HEK293 (cell line): ENCODE measurements at regions of chr3 and their contacts with region 1.

Region 1: GRCh38 chr3:185942907-185943759 is 5.3 kb upstream of the TRA2B start:
- H3K4me3 ChIP-seq: no peak overlapping the region
- H3K27ac ChIP-seq: no peak overlapping the region
- H3K4me1 ChIP-seq: no peaks in the 10 kb centered on the region
- CTCF ChIP-seq: peak; percentile 44; the same call in 1 of the 2 replicates

Region 2: DNA sequence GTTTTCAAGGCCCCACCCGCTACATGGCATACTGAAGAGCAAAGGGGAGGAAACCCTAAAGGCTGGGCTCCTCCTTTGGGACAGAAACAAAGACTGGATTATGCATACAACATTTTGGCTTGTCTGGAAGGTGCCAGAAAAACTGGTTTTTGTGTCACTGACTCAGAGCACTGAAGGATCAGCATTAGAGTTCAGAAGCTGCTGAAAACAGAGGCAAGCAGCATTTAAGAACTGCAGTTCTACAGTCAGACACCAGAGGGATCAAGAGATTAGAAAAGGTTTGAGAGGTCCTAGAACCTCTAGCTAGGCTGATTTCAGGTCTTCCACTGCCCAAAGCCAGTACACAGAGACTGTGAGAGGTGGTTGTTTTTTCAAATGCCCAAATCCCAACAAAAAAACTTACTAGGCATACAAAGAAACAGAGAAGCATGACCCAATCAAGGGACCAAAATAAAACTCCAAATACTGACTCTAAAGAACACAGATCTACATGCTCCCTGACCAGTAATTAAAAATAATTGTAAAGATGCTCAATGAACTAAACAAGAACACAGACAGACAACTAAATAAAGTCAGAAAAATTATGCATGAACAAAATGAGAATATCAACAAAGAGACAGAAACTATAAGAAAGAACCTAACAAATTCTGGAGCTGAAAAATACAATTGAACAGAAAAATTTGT is 265.8 kb before region 1 on chr3:
- CTCF ChIA-PET with region 1: interaction called, 12 read pairs
- POLR2A ChIA-PET with region 1: no interaction called
- H3K4me3 ChIP-seq: no peak overlapping the region
- H3K27ac ChIP-seq: no peak overlapping the region
- H3K4me1 ChIP-seq: no peaks in the 10 kb centered on the region
- CTCF ChIP-seq: no peak

Region 3: GRCh38 chr3:185733980-185734724 is 209.0 kb before region 1 on chr3:
- CTCF ChIA-PET with region 1: interaction called, 10 read pairs
- POLR2A ChIA-PET with region 1: interaction called, 3 read pairs
- H3K4me3 ChIP-seq: no peak overlapping the region
- H3K27ac ChIP-seq: no peak overlapping the region
- H3K4me1 ChIP-seq: peaks cover 14% of the 10 kb centered on the region; the same call in 1 of the 2 replicates
- CTCF ChIP-seq: peak; percentile 31; the same call in 1 of the 2 replicates

Region 4: DNA sequence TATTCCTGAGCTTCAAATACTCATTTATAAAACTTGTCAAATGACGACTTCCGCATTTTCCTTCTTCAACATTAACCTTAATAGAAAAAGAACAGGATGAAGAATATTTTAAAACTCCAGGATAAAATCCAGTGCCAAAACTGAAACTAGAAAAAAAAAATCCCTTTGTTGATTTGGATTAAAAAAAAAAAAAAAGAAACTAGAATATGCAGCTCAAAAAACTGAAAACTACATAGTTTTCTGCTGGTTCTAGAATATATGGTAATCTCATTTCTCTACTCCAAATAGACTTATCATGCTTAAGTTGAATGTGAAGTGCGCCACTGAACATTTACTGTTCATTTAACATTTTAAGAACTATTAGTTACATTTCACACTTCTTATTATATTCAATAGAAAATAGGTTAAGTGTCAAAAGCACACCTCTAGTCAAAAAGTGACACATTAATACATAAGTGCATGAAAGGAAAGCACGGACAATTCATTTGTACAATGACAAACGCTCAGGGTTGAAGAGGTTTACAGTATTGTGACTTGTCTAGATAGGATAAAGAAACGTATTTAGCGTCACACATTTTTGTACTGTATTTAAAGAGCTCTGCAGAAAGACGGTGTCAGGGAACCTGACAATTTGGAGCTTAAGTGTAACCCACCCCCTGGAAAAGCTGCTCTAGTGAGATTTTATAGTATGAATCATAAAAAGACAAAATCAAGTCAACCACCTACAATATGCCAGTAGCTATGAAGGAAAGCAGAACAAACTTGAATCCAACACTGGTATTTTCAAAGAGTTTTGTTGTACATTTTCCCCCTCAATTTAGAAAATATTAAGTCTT is 11.1 kb before region 1 on chr3:
- CTCF ChIA-PET with region 1: interaction called, 12 read pairs
- POLR2A ChIA-PET with region 1: interaction called, 17 read pairs
- H3K4me3 ChIP-seq: peak overlapping the region; percentile 98
- H3K27ac ChIP-seq: no peak overlapping the region
- H3K4me1 ChIP-seq: peaks cover 43% of the 10 kb centered on the region
- CTCF ChIP-seq: no peak

Region 5: DNA sequence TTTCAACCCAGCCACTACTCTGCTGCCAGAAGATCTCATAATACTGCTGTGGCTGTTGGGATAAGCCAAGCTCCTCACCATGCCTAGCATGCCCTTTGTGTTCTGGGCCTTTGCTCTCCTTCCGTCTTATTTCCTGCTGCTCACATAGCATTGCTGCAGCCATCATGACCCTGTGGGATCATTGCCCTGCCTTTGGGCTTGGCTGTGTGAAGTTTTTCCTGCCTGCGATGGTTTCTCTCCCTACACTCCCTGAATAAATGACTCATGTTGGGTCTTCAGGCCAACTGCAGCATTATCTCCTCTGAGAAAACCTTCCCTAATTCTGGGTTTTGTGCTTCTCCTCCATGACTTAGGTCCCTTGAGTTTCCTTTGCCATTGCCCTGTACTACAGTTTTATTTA is 15.5 kb after region 1 on chr3:
- CTCF ChIA-PET with region 1: interaction called, 93 read pairs
- POLR2A ChIA-PET with region 1: interaction called, 7 read pairs
- H3K4me3 ChIP-seq: no peak overlapping the region
- H3K27ac ChIP-seq: no peak overlapping the region
- H3K4me1 ChIP-seq: no peaks in the 10 kb centered on the region
- CTCF ChIP-seq: no peak

Region 6: DNA sequence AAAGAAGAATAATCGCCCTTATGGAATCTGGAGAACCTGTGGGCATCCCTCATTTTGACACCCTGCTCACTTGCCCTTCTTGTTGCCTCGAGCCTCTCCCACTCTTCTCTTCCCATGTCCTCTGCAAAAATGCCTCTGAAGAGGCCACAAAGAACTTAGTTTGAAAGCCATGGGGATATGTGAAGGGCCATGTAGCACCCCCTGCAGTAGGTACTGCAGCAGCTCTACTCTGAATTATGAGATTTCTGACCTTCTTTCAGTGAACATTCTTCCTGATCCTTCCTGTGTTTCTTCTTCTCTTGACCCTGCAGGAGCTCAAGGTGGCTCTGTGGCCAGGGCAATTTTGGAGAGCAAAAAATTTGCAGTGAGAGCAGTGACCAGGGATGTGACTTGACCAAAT is 25.0 kb after region 1 on chr3:
- CTCF ChIA-PET with region 1: interaction called, 11 read pairs
- POLR2A ChIA-PET with region 1: no interaction called
- H3K4me3 ChIP-seq: no peak overlapping the region
- H3K27ac ChIP-seq: no peak overlapping the region
- H3K4me1 ChIP-seq: no peaks in the 10 kb centered on the region
- CTCF ChIP-seq: no peak

Region 7: DNA sequence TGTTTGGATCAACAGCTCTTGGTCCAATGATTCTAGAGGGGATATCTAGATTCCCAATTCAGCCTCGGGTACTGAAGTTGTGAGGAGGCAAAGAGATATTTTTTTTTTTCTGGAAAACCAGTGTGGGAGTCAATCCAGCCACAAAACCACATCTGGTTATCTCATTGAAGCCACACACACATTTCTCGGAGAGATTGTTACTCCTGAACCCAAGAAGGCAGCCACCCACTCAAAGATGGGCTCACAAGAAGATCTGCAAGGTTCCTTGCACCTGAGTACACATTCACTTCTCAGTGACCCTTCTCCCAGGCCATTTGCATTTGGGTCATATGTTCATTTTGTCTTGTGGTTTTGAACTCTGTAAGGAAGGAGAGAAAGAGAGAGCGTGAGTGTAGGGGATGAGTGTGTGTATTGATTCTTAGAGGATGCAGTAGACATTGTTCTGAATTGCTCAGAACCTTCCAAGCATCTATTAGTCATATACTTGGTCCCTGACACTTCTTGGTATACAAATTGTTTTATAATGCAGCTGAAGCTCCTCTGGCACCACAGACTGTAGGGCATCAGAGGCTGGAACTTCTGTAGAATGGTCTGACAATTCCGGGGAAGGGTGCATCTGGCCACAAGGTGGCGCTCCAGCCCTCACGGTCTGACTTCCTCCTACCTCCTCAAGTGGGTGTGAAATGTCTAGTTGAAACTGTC is 34.0 kb after region 1 on chr3:
- CTCF ChIA-PET with region 1: interaction called, 24 read pairs
- POLR2A ChIA-PET with region 1: no interaction called
- H3K4me3 ChIP-seq: no peak overlapping the region
- H3K27ac ChIP-seq: no peak overlapping the region
- H3K4me1 ChIP-seq: no peaks in the 10 kb centered on the region
- CTCF ChIP-seq: peak; percentile 52